Natural killer cell (primary cell): ENCODE measurements at regions of chr1 and their contacts with region 1.

Region 1: GRCh38 chr1:10494754-10495474 is 20.2 kb downstream of the PEX14 start:
- DNase-seq: peak; percentile 79 to 86
- ATAC-seq: peak; percentile 77 to 88 (median 84)
- H3K4me3 ChIP-seq: peak overlapping the region; percentile 46
- H3K4me3 Mint-ChIP-seq: peak overlapping the region; percentile 94
- H3K27ac ChIP-seq: peak overlapping the region; percentile 77
- H3K27ac Mint-ChIP-seq: peak overlapping the region; percentile 92 to 96
- H3K4me1 ChIP-seq: peaks cover 37% of the 10 kb centered on the region
- H3K4me1 Mint-ChIP-seq: peaks cover 36 to 44% of the 10 kb centered on the region in 2 donors
- H3K27me3 ChIP-seq: no peaks in the 10 kb centered on the region
- H3K27me3 Mint-ChIP-seq: no peaks in the 10 kb centered on the region
- CTCF ChIP-seq: peak; percentile 98

Region 2: DNA sequence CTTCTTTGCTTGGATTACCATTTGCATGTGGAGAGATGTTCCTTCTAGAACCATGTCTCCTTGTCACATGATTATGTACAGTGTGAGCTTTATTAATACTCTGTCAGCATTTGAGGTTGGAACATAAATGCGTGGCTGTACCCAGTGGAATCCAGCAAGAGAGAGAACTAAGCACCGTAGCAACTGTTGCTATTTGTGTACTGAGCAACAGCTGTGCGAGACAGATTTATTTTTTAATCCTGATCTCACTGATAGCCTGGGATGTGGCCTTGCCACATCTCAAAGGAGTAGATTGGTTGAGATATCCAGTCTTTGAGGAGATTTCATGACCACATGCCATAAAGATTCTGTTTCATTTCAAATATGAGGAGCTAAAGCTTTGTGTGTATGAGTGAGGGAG is 241.2 kb before region 1 on chr1:
- intact Hi-C with region 1: no loop called
- DNase-seq: no peak
- ATAC-seq: no peak
- H3K4me3 ChIP-seq: no peak overlapping the region
- H3K4me3 Mint-ChIP-seq: no peak overlapping the region
- H3K27ac ChIP-seq: no peak overlapping the region
- H3K27ac Mint-ChIP-seq: peak overlapping the region in 1 of 2 donors; percentile 58
- H3K4me1 ChIP-seq: no peaks in the 10 kb centered on the region
- H3K4me1 Mint-ChIP-seq: peaks cover under 1 to 5% of the 10 kb centered on the region in 2 donors
- H3K27me3 ChIP-seq: no peaks in the 10 kb centered on the region
- H3K27me3 Mint-ChIP-seq: no peaks in the 10 kb centered on the region
- CTCF ChIP-seq: no peak

Region 3: GRCh38 chr1:10424034-10424433 is 70.9 kb before region 1 on chr1:
- intact Hi-C with region 1: no loop called
- DNase-seq: no peak
- ATAC-seq: no peak
- H3K4me3 ChIP-seq: no peak overlapping the region
- H3K4me3 Mint-ChIP-seq: no peak overlapping the region
- H3K27ac ChIP-seq: no peak overlapping the region
- H3K27ac Mint-ChIP-seq: no peak overlapping the region
- H3K4me1 ChIP-seq: no peaks in the 10 kb centered on the region
- H3K4me1 Mint-ChIP-seq: peaks cover 0 to 4% of the 10 kb centered on the region in 2 donors
- H3K27me3 ChIP-seq: no peaks in the 10 kb centered on the region
- H3K27me3 Mint-ChIP-seq: no peaks in the 10 kb centered on the region
- CTCF ChIP-seq: no peak

Region 4: DNA sequence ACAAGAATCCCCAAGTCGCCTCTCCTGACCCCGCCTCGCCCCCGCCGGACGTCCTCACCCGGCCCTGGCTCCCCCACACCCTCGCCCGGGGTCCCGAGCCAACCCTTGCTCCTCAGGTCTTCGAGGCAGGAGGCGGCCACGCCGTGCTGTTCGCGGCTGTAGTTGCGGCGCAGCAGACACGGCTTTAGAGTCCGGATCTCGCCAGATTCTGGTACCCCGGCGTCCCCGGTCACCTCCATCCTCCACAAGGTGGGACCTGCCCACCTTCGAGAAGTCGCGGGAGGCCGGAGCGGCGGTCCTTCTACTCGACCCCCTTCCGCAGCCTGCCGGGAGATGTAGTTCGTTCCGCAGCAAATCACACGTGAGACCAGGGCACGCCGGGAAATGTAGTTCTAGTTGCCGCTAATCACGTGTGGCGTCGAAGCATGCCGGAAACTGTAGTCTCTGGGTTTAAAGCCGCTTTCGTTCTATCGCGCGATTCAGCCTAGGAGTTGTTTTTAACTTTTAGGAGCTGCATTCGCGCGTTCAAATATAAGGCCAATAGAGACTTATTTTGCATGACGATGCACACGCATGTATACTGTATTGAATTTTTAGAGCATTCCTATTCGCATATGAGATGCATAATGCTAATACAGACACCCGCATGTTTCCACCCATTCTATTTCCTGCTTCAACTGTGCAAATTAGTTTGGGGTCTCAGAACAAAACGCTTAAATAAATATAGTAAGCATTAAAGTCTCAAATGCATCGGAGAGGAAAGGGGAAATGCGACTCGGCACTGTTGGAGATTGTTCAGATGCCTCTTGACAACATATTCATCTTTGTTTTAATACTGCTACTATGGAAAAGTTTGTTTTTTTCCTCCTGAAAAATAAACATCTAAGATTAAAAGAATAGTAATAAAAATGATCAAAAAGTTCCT is 22.4 kb before region 1 on chr1 and contains the start of gene DFFA:
- intact Hi-C with region 1: loop called (anchors 1 kb)
- DNase-seq: peak; percentile 85 to 95
- ATAC-seq: peak; percentile 78 to 91 (median 90)
- H3K4me3 ChIP-seq: peak within 1 kb of the TSS; percentile 82
- H3K4me3 Mint-ChIP-seq: peak within 1 kb of the TSS; percentile 96
- H3K27ac ChIP-seq: peak within 1 kb of the TSS; percentile 36
- H3K27ac Mint-ChIP-seq: peak within 1 kb of the TSS; percentile 86 to 93
- H3K4me1 ChIP-seq: peaks cover 36% of the 10 kb centered on the region
- H3K4me1 Mint-ChIP-seq: peaks cover 41 to 54% of the 10 kb centered on the region in 2 donors
- H3K27me3 ChIP-seq: no peaks in the 10 kb centered on the region
- H3K27me3 Mint-ChIP-seq: no peaks in the 10 kb centered on the region
- CTCF ChIP-seq: no peak
- total RNA-seq, gene DFFA: 17.5 to 21.8 (median 21.5) TPM

Region 5: DNA sequence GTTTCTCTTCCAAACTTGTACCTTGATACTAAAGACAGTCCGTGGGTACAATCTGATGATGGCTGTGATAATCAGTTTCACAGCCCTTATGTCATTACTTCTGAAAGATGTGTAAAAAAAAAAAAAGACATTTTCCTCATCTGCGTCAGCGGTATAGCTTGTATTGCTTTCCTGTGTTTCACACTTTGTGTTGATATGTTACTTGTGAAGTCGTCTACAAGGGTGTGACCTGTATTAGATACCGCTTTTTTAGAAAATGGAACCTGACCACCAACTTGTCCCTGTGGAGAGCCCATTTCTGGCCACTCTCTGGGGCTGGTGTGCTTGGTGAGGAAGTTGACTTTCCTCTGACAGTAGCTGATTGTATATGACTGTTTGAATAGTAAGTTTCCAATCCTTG is 30.3 kb after region 1 on chr1:
- intact Hi-C with region 1: loop called (anchors 1 kb)
- DNase-seq: peak; percentile 54 to 71
- ATAC-seq: peak; percentile 87 to 94 (median 92)
- H3K4me3 ChIP-seq: no peak overlapping the region
- H3K4me3 Mint-ChIP-seq: peak overlapping the region; percentile 81
- H3K27ac ChIP-seq: peak overlapping the region; percentile 86
- H3K27ac Mint-ChIP-seq: peak overlapping the region; percentile 94 to 98
- H3K4me1 ChIP-seq: peaks cover 14% of the 10 kb centered on the region
- H3K4me1 Mint-ChIP-seq: peaks cover 42 to 58% of the 10 kb centered on the region in 2 donors
- H3K27me3 ChIP-seq: no peaks in the 10 kb centered on the region
- H3K27me3 Mint-ChIP-seq: no peaks in the 10 kb centered on the region
- CTCF ChIP-seq: no peak

Region 6: DNA sequence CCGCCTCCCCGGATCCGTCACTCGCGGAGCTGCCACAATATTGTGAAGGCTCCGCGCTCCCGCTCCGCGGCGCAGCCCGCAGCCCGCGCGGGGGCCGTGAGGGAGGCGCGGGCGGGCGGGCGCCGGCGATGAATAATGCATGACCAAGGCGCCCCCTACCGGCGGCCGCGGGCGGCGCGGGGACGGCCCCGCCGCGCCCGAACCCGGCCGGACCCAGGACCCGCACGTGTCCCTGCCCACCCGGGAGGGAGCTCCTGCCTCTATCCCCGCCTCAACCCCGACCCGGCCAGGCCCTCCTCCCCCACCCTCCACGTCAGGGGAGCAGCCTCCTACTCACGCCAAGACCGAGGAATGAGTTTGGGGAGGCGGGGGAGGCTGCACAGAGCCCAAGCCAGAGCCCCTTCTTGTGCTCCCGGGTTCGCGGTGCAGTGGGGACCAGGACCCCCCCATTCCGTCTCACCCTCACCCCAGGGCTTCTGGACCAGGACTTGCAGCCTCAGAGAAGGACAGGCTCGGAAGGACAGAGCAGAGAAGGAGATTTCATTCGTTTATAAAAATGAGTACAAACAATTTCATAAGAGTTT is 372.3 kb after region 1 on chr1:
- intact Hi-C with region 1: loop called (anchors 2 kb)
- DNase-seq: peak; percentile 75 to 77
- ATAC-seq: peak; percentile 79 to 95 (median 92)
- H3K4me3 ChIP-seq: no peak overlapping the region
- H3K4me3 Mint-ChIP-seq: peak overlapping the region; percentile 61
- H3K27ac ChIP-seq: no peak overlapping the region
- H3K27ac Mint-ChIP-seq: no peak overlapping the region
- H3K4me1 ChIP-seq: peaks cover 13% of the 10 kb centered on the region
- H3K4me1 Mint-ChIP-seq: peaks cover 5 to 16% of the 10 kb centered on the region in 2 donors
- H3K27me3 ChIP-seq: peaks cover 32% of the 10 kb centered on the region
- H3K27me3 Mint-ChIP-seq: peaks cover 48 to 56% of the 10 kb centered on the region in 2 donors
- CTCF ChIP-seq: peak; percentile 86

Region 7: GRCh38 chr1:10941891-10942541 is 447.1 kb after region 1 on chr1:
- intact Hi-C with region 1: loop called (anchors 1 kb)
- DNase-seq: peak; percentile 66 to 80
- ATAC-seq: peak; percentile 66 to 89 (median 85)
- H3K4me3 ChIP-seq: no peak overlapping the region
- H3K4me3 Mint-ChIP-seq: no peak overlapping the region
- H3K27ac ChIP-seq: no peak overlapping the region
- H3K27ac Mint-ChIP-seq: no peak overlapping the region
- H3K4me1 ChIP-seq: peaks cover 18% of the 10 kb centered on the region
- H3K4me1 Mint-ChIP-seq: peaks cover 6 to 25% of the 10 kb centered on the region in 2 donors
- H3K27me3 ChIP-seq: peaks cover 13% of the 10 kb centered on the region
- H3K27me3 Mint-ChIP-seq: peaks cover 20 to 32% of the 10 kb centered on the region in 2 donors
- CTCF ChIP-seq: peak; percentile 96